AG04449 (cell line): ENCODE measurements at regions of chr1 and their contacts with region 1.

Region 1: GRCh38 chr1:209692745-209693504 is 11.7 kb upstream of the HSD11B1 start:
- DNase-seq: peak; percentile 50
- H3K4me3 ChIP-seq: no peak overlapping the region
- CTCF ChIP-seq: peak; percentile 69

Region 2: GRCh38 chr1:209375671-209376365 is 317.1 kb before region 1 on chr1:
- CTCF ChIA-PET with region 1: no interaction called
- POLR2A ChIA-PET with region 1: no interaction called
- DNase-seq: no peak
- H3K4me3 ChIP-seq: no peak overlapping the region
- CTCF ChIP-seq: no peak

Region 3: GRCh38 chr1:209576798-209577197 is 116.1 kb before region 1 on chr1:
- CTCF ChIA-PET with region 1: interaction called, 314 read pairs
- POLR2A ChIA-PET with region 1: no interaction called
- DNase-seq: no peak
- H3K4me3 ChIP-seq: no peak overlapping the region
- CTCF ChIP-seq: peak; percentile 96

Region 4: GRCh38 chr1:209601809-209602657 is 90.9 kb before region 1 on chr1:
- CTCF ChIA-PET with region 1: interaction called, 34 read pairs
- POLR2A ChIA-PET with region 1: no interaction called
- DNase-seq: no peak
- H3K4me3 ChIP-seq: no peak overlapping the region
- CTCF ChIP-seq: peak; percentile 77

Region 5: DNA sequence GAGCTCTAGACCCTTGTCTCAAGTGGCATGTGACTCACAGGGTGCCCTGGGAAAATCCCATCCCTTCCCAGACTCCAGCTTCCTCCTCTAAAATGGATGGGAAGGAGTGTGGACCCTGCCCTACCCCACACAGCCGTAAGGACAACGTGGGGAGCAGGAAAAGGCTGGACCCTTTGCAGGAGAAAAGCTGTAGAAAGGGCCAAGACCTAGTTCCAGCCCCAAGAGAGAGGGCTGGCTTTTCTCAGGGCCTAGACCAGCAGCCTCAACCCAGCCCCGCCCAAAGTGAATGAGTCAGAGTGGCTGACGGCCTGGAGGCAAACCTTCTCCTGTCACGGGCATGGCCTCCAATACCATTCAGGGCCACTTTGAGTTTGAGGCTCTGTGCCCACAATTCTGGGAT is 41.8 kb before region 1 on chr1:
- CTCF ChIA-PET with region 1: interaction called, 48 read pairs
- POLR2A ChIA-PET with region 1: no interaction called
- DNase-seq: no peak
- H3K4me3 ChIP-seq: no peak overlapping the region
- CTCF ChIP-seq: no peak

Region 6: DNA sequence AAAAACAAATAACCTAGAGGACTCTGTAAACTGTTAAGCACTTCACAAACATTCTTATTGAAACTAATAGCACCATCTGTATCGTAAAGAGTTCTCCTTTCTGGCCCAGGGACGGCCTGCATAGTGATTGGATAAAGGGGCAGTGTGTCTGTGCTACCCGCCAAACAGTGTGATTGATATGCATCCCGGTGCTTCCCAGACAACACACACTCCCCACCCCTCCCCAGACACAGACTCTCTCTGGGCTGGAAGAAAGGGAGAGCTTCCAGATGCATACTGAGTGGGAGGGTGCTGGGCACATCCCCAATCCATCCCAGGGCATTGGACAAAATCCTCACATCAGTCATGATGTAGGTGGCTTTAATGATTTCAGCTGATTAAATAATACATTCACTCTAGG is 15.4 kb after region 1 on chr1:
- CTCF ChIA-PET with region 1: interaction called, 12 read pairs
- POLR2A ChIA-PET with region 1: no interaction called
- DNase-seq: no peak
- H3K4me3 ChIP-seq: no peak overlapping the region
- CTCF ChIP-seq: no peak

Region 7: GRCh38 chr1:209774592-209774991 is 81.7 kb after region 1 on chr1:
- CTCF ChIA-PET with region 1: no interaction called
- POLR2A ChIA-PET with region 1: no interaction called
- DNase-seq: no peak
- H3K4me3 ChIP-seq: no peak overlapping the region
- CTCF ChIP-seq: no peak

Region 8: DNA sequence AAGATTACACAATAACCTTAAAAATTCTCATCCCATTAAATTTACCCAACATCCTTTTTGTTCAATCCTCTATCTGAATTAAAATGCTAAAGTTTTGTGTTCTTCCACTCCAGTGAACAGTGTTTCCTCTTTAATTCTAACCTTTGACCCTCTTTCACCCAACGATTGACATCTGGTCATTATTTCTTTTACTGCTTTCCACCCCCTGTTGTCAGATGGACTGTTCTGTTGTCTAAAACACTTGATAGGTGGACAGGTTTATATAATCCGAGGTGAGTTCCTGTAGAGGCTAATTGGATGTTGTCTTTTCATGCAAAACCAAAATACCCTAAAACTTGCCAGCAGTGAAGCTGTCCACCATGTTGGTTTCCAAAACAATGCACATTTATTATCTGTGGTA is 466.3 kb after region 1 on chr1:
- CTCF ChIA-PET with region 1: no interaction called
- POLR2A ChIA-PET with region 1: no interaction called
- DNase-seq: no peak
- H3K4me3 ChIP-seq: no peak overlapping the region
- CTCF ChIP-seq: no peak